Activated naive CD4-positive, alpha-beta T cell treated with anti-CD3 and anti-CD28 coated beads for 36 hours (primary cell): ENCODE measurements at regions of chr9 and their contacts with region 1.

Region 1: GRCh38 chr9:22238809-22239684 is 207.6 kb upstream of the DMRTA1 start:
- DNase-seq: no peak
- H3K4me3 Mint-ChIP-seq: no peak overlapping the region
- H3K27ac Mint-ChIP-seq: no peak overlapping the region
- H3K4me1 Mint-ChIP-seq: peaks cover 49% of the 10 kb centered on the region
- H3K27me3 Mint-ChIP-seq: peaks cover 15% of the 10 kb centered on the region

Region 2: DNA sequence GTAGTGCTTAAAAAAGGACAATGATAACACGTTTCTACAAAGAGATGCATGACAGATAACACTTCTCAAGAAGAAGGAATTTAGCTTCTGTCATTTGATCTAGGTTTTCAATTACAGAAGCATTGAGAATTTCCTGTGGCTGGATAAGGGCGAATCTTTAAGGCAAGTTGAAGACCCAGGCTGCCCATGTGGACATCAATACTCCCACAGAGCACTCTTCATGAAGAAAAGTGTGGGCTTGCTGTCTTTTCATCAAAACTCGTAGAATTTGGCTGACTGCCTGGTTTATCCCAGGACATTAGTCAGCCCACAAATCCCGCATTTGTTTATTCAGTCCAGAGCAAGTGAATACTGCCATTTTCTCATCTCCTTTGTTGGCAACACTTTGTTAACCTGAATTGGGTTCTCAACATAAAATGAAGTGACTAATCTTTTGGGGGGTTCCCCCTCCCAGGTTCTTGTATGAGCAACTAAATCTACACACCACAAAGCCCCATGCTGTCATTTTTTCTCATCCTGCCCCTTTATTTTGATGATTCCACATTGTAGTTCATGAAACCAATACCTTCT is 186.6 kb before region 1 on chr9:
- CTCF ChIA-PET with region 1: interaction called, 6 read pairs
- intact Hi-C with region 1: loop called (anchors 10 kb)
- DNase-seq: peak; percentile 67
- H3K4me3 Mint-ChIP-seq: no peak overlapping the region
- H3K27ac Mint-ChIP-seq: no peak overlapping the region
- H3K4me1 Mint-ChIP-seq: peaks cover 29% of the 10 kb centered on the region
- H3K27me3 Mint-ChIP-seq: peaks cover 20% of the 10 kb centered on the region

Region 3: DNA sequence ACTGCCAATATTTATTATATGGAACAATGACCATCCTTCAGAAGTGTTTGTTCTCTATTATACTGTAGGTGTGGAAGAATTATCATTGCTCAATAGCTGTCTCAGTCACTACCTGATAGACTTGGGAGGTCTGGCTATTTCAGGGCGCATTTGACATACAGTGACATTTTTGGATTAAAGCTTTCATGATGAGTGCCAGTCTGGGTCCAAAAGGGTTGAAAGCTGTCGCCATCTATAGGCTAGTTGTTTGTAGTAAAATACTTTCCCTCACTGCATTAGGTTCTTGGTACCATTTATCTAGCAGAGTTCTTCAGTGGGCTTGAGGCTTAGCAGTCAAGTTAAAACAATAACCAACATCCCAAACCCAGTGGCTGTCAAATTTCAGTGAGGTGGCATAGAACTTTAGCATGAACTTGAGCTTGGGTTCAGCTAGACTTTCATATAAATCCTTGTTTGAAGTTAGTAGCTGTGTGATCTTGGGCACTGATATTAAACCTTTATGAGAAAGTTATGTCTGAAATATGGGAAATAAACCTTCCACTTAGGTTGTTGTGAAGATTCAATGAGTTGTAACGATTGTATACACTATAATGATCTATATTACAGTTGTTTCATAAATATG is 119.4 kb before region 1 on chr9:
- CTCF ChIA-PET with region 1: interaction called, 5 read pairs
- intact Hi-C with region 1: loop called (anchors 2 kb)
- DNase-seq: peak; percentile 32
- H3K4me3 Mint-ChIP-seq: no peak overlapping the region
- H3K27ac Mint-ChIP-seq: no peak overlapping the region
- H3K4me1 Mint-ChIP-seq: no peaks in the 10 kb centered on the region
- H3K27me3 Mint-ChIP-seq: peaks cover 9% of the 10 kb centered on the region

Region 4: DNA sequence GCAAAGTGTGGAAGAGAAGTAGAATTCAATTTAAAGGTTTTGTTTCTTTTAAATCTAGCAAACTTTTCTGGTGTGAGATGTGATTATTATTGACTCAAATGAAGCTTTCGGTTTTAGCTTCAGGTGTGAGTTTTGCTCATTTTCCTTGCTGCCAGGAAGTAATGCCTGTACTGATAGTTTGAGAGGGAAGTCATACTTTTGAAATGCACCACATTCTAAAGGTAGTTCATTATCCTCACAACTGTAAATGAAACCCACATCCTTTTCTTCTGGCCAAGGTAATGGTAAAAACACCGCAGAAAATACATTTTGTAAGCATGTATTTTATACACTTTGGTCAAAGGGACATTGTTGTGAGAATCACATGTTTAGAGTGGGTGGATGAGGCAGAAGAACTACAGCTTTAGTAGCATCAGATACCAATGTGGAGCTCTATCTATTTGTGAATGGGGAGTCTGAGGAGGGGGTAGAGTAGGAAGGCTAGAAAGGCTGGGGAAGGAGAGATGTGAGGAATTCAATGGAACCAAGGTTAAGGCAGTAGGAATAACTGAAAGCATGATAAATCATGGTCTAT is 63.0 kb before region 1 on chr9:
- CTCF ChIA-PET with region 1: interaction called, 11 read pairs
- intact Hi-C with region 1: loop called (anchors 2 kb)
- DNase-seq: peak; percentile 16
- H3K4me3 Mint-ChIP-seq: no peak overlapping the region
- H3K27ac Mint-ChIP-seq: no peak overlapping the region
- H3K4me1 Mint-ChIP-seq: peaks cover 10% of the 10 kb centered on the region
- H3K27me3 Mint-ChIP-seq: peaks cover 34% of the 10 kb centered on the region

Region 5: DNA sequence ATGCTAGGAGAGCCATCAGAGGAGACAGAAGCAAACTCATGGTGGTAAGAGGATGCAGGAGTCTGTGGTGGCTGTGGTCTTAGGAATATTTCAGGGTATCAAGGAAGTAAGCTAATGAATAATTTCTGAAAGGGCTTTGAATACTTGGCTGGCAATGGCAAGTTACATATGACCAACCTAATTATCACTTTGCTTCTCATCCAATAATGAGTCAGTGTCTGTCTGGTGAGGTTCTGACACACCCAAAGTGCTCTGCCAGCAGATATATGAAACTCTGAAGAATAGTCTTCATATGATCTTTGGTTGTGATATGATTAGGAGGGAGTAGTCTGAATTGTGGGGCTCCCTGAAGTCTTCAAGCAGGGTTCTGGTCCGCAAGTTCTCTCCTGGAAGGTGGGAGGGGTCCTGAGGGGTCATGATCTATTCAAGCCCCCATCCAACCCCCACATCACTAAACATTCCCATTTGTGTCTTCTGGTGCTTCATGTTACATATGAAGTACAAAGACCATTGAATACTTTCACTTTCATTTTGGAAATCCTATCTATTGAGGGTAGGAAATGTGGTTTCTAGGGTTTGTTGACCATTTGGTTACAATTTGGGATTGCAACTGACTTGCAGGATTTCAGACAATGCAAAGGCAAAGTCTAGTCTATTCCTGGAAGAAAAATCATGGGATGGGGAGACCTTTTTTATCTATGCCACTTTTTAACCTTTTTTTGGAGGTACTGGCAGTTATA is 30.0 kb before region 1 on chr9:
- CTCF ChIA-PET with region 1: interaction called, 11 read pairs
- intact Hi-C with region 1: loop called (anchors 1 kb)
- DNase-seq: peak; percentile 14
- H3K4me3 Mint-ChIP-seq: no peak overlapping the region
- H3K27ac Mint-ChIP-seq: no peak overlapping the region
- H3K4me1 Mint-ChIP-seq: peaks cover 22% of the 10 kb centered on the region
- H3K27me3 Mint-ChIP-seq: no peaks in the 10 kb centered on the region

Region 6: GRCh38 chr9:22214497-22215031 is 24.5 kb before region 1 on chr9:
- CTCF ChIA-PET with region 1: interaction called, 11 read pairs
- intact Hi-C with region 1: loop called (anchors 1 kb)
- DNase-seq: no peak
- H3K4me3 Mint-ChIP-seq: no peak overlapping the region
- H3K27ac Mint-ChIP-seq: no peak overlapping the region
- H3K4me1 Mint-ChIP-seq: peaks cover 18% of the 10 kb centered on the region
- H3K27me3 Mint-ChIP-seq: peaks cover 4% of the 10 kb centered on the region